ENCODE measurements at regions of chr6 and their contacts with region 1.

Region 1: GRCh38 chr6:7615611-7616383 is 25.8 kb downstream of the SNRNP48 start:
- DNase-seq: peak; percentile 62
- H3K4me3 ChIP-seq: no peak overlapping the region
- H3K27ac ChIP-seq: no peak overlapping the region
- H3K4me1 ChIP-seq: peaks cover 22% of the 10 kb centered on the region
- H3K27me3 ChIP-seq: no peaks in the 10 kb centered on the region
- CTCF ChIP-seq: peak; percentile 71 to 81

Region 2: GRCh38 chr6:6676910-6677441 is 938.8 kb before region 1 on chr6:
- CTCF ChIA-PET with region 1: no interaction called
- dilution Hi-C with region 1: no loop called
- in situ Hi-C with region 1: loop called in 1 of 2 experiments (anchors 25 kb)
- intact Hi-C with region 1: loop called (anchors 2 kb)
- DNase-seq: peak; percentile 63
- H3K4me3 ChIP-seq: no peak overlapping the region
- H3K27ac ChIP-seq: no peak overlapping the region
- H3K4me1 ChIP-seq: peaks cover under 1% of the 10 kb centered on the region
- H3K27me3 ChIP-seq: no peaks in the 10 kb centered on the region
- CTCF ChIP-seq: peak; percentile 96 to 98

Region 3: GRCh38 chr6:7249946-7250643 is 365.7 kb before region 1 on chr6:
- CTCF ChIA-PET with region 1: no interaction called
- dilution Hi-C with region 1: no loop called
- in situ Hi-C with region 1: no loop called
- intact Hi-C with region 1: no loop called
- DNase-seq: no peak
- H3K4me3 ChIP-seq: no peak overlapping the region
- H3K27ac ChIP-seq: no peak overlapping the region
- H3K4me1 ChIP-seq: no peaks in the 10 kb centered on the region
- H3K27me3 ChIP-seq: no peaks in the 10 kb centered on the region
- CTCF ChIP-seq: no peak

Region 4: DNA sequence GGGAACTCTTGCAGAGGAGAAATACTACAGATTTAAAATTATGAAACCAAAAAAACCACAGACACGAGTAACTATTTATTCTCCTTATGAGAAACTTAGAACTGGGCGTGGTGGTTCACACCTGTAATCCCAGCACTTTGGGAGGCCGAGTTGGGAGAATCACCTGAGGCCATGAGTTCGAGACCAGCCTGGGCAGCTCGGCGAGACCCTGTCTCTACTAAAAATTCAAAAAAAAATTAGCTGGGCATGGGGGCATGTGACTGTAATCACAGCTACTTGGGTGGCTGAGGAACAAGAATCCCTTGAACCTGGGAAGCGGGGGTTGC is 339.6 kb before region 1 on chr6:
- CTCF ChIA-PET with region 1: interaction called, 5 read pairs
- dilution Hi-C with region 1: no loop called
- in situ Hi-C with region 1: no loop called
- intact Hi-C with region 1: loop called (anchors 1 kb)
- DNase-seq: no peak
- H3K4me3 ChIP-seq: no peak overlapping the region
- H3K27ac ChIP-seq: no peak overlapping the region
- H3K4me1 ChIP-seq: no peaks in the 10 kb centered on the region
- H3K27me3 ChIP-seq: no peaks in the 10 kb centered on the region
- CTCF ChIP-seq: no peak

Region 5: DNA sequence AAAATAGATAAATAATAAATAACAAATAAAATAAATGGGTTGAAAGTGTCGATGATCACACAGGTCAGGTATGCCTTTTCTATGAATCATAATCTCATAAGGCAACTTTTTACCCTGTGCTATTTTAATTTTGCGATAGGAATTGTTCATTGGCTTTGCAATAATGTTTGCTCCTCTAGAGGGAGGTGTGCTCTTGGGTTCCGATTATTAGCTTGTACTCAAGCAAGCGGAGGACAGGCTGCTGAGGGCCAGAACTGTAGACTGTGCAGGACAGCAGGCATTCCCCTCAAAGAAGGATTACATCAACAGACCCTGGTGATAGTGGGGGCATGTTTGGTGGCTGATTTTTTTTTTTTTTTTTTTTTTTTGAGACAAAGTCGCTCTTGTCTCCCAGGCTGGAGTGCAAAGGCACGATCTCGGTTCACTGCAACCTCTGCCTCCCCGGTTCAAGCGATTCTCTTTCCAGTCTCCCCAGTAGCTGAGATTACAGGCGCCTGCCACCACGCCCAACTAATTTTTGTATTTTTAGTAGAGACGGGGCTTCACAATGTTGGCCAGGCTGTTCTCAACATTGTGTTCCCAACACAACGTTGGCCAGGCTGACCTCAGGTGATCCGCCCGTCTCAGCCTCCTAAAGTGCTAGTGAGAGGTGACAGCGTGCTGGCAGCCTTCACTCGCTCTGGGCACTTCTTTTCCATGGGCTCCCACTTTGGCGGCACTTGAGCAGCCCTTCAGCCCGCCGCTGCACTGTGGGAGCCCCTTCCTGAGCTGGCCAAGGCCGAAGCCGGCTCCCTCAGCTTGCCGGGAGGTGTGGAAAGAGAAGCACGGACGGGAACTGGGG is 190.6 kb before region 1 on chr6:
- CTCF ChIA-PET with region 1: no interaction called
- dilution Hi-C with region 1: no loop called
- in situ Hi-C with region 1: no loop called
- intact Hi-C with region 1: loop called (anchors 1 kb)
- DNase-seq: peak; percentile 86
- H3K4me3 ChIP-seq: no peak overlapping the region
- H3K27ac ChIP-seq: no peak overlapping the region
- H3K4me1 ChIP-seq: no peaks in the 10 kb centered on the region
- H3K27me3 ChIP-seq: no peaks in the 10 kb centered on the region
- CTCF ChIP-seq: peak; percentile 56 to 78

Region 6: GRCh38 chr6:7725849-7726415 is 110.1 kb after region 1 on chr6 and contains the start of gene BMP6:
- CTCF ChIA-PET with region 1: interaction called, 58 read pairs
- dilution Hi-C with region 1: no loop called
- in situ Hi-C with region 1: no loop called
- intact Hi-C with region 1: loop called (anchors 2 kb)
- DNase-seq: peak; percentile 86
- H3K4me3 ChIP-seq: peak within 1 kb of the TSS; percentile 42 to 64 (median 62)
- H3K27ac ChIP-seq: no peak within 1 kb of the TSS
- H3K4me1 ChIP-seq: peaks cover 19% of the 10 kb centered on the region
- H3K27me3 ChIP-seq: peaks cover 24% of the 10 kb centered on the region
- CTCF ChIP-seq: no peak
- total RNA-seq, gene BMP6: 0.33 to 1.2 TPM

Region 7: GRCh38 chr6:8063761-8064637 is 448.2 kb after region 1 on chr6 and contains the start of gene BLOC1S5:
- CTCF ChIA-PET with region 1: no interaction called
- dilution Hi-C with region 1: no loop called
- in situ Hi-C with region 1: no loop called
- intact Hi-C with region 1: loop called (anchors 1 kb)
- DNase-seq: peak; percentile 92
- H3K4me3 ChIP-seq: peak within 1 kb of the TSS; percentile 81 to 97 (median 87)
- H3K27ac ChIP-seq: peak within 1 kb of the TSS; percentile 88
- H3K4me1 ChIP-seq: peaks cover 4% of the 10 kb centered on the region
- H3K27me3 ChIP-seq: no peaks in the 10 kb centered on the region
- CTCF ChIP-seq: peak in 1 of 2 donors; percentile 0
- total RNA-seq, gene BLOC1S5: 9.0 to 11.9 TPM